ENCODE measurements at regions of chr2 and their contacts with region 1.

Region 1: DNA sequence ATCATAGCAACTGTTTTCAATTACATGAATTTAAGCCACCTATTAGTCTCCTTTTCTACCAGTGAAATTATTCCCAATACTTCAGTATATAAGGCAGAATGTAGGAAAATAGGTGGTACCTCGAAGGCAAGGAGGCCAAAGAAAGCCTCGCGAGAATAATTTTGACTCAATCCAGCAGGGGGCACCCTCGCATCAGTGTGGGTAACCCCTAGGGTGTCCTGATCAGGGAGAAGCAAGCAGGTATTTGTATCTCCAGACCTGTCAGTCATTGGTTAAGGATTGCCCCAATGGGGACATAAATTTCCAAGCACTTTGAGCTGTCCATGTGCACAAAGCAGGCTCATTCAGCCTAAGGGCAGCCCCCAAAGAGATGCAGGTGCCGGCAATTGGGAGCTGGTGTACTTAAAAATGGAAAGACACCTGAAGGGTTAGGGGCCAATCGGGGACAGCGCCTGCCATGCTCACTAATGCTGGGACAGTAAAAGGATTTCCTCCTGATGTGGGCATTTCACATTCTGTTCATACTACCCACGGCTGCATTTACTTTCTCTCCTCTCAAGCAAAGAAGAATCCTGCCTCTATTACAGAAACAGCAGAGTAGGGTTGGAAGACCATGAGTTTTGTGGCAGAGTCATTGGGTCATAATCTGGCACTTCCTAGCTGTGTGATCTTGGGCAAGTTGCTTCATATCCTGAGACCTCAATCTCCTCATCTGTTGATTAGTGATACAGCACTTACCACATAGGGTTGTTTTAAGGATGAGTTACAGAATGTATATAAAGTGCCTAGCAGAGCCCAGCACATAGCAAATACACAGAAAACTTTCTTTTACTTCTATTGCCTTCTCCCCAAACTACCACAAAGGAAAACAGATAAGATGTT is 136.1 kb downstream of the ICOS start:
- DNase-seq: peak; percentile 81
- H3K4me3 Mint-ChIP-seq: no peak overlapping the region
- H3K27ac Mint-ChIP-seq: no peak overlapping the region
- H3K4me1 Mint-ChIP-seq: no peaks in the 10 kb centered on the region
- H3K27me3 Mint-ChIP-seq: peaks cover 5% of the 10 kb centered on the region

Region 2: GRCh38 chr2:203706403-203706802 is 366.3 kb before region 1 on chr2 and contains the start of gene CD28:
- CTCF ChIA-PET with region 1: no interaction called
- DNase-seq: peak; percentile 95
- H3K4me3 Mint-ChIP-seq: peak within 1 kb of the TSS; percentile 86
- H3K27ac Mint-ChIP-seq: peak within 1 kb of the TSS; percentile 99
- H3K4me1 Mint-ChIP-seq: peaks cover 44% of the 10 kb centered on the region
- H3K27me3 Mint-ChIP-seq: no peaks in the 10 kb centered on the region

Region 3: DNA sequence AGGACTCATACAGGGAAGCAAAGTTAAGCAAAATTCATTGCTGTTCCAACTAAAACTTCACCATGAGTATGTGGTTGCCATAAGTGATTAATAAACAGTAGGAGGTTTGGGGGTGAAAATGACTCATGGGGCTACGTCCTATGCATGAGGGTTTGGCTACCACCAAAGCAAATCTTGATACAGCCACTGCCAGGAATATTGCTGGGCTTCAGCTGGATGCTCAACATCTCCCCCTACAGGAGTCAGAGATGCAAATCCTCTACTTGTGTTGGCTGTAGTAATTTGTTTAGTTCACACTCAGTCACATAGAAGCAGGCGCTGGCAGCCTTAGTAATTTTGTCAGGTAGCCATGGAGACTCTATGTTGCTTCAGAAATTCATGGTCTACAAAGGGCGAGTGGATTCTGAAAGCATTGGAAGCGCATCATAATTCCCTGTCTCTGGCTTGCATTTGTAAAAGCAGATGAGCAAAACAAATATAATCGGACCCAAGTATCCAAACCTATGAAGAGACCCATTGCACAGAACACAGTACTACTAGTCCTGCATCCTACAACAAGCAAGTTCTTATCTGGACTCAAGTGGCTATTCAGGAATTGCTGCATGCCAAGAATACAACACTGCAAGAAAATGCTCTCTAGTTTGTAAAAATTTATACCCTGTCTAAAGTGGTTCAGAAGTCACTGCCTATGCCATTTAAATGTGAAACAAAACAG is 290.3 kb before region 1 on chr2:
- CTCF ChIA-PET with region 1: no interaction called
- DNase-seq: peak; percentile 69
- H3K4me3 Mint-ChIP-seq: no peak overlapping the region
- H3K27ac Mint-ChIP-seq: no peak overlapping the region
- H3K4me1 Mint-ChIP-seq: peaks cover 47% of the 10 kb centered on the region
- H3K27me3 Mint-ChIP-seq: no peaks in the 10 kb centered on the region

Region 4: DNA sequence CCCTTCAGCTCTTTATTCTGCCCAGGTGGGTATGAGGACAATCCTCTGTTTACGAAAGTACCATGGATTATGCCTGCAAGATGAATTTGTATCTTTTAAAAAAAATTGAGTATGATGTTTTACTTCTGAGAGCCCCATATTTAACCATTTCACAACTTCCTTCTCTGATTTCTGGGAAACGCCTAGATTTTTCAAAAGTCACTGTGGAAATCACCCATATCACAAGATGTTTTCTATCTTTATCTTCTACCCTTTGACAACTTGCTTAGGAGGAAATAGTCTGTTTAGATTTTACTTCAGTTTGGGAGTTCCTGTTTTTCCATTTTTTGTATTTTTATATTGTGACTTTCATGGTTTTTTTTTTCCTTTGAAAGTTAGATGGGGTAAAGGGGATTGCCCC is 83.2 kb before region 1 on chr2:
- CTCF ChIA-PET with region 1: no interaction called
- DNase-seq: no peak
- H3K4me3 Mint-ChIP-seq: no peak overlapping the region
- H3K27ac Mint-ChIP-seq: peak overlapping the region; percentile 42
- H3K4me1 Mint-ChIP-seq: peaks cover 35% of the 10 kb centered on the region
- H3K27me3 Mint-ChIP-seq: no peaks in the 10 kb centered on the region

Region 5: DNA sequence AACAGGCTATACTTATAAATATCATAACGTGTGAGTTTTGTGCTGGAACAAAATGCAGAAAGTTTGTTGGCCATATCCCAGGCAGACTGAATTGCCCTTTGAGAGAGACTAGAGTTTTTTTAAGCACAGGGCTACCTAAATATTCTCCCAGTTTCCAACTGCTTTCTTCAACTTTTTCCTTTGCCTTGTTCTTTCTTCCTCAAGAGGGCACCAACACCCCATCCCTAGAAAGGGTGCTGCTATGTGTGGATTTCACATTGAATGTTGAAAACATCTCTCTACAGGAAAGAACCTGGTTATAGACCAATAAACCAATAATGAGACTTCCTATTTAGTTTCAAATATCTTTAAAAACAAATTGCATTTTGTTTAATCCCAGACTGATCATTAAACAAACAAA is 48.2 kb before region 1 on chr2:
- CTCF ChIA-PET with region 1: interaction called, 19 read pairs
- DNase-seq: peak; percentile 46
- H3K4me3 Mint-ChIP-seq: no peak overlapping the region
- H3K27ac Mint-ChIP-seq: no peak overlapping the region
- H3K4me1 Mint-ChIP-seq: peaks cover 49% of the 10 kb centered on the region
- H3K27me3 Mint-ChIP-seq: no peaks in the 10 kb centered on the region

Measured in activated naive CD4-positive, alpha-beta T cell treated with anti-CD3 and anti-CD28 coated beads, Interleukin-2, amount 10 ng/mL, durations not matched to agents 7 days and 5 days (primary cell).